CD8-positive, alpha-beta memory T cell (primary cell): ENCODE measurements at regions of chr17 and their contacts with region 1.

Region 1: GRCh38 chr17:29777663-29778062 is 152.4 kb downstream of the SSH2 start:
- DNase-seq: no peak
- H3K4me3 ChIP-seq: no peak overlapping the region
- H3K4me3 Mint-ChIP-seq: no peak overlapping the region
- H3K27ac ChIP-seq: no peak overlapping the region
- H3K27ac Mint-ChIP-seq: peak overlapping the region in 1 of 8 donors; percentile 56
- H3K4me1 ChIP-seq: peaks cover 4% of the 10 kb centered on the region
- H3K4me1 Mint-ChIP-seq: peaks cover 8 to 9% (median 8%) of the 10 kb centered on the region in 3 donors
- H3K27me3 ChIP-seq: no peaks in the 10 kb centered on the region
- H3K27me3 Mint-ChIP-seq: no peaks in the 10 kb centered on the region

Region 2: DNA sequence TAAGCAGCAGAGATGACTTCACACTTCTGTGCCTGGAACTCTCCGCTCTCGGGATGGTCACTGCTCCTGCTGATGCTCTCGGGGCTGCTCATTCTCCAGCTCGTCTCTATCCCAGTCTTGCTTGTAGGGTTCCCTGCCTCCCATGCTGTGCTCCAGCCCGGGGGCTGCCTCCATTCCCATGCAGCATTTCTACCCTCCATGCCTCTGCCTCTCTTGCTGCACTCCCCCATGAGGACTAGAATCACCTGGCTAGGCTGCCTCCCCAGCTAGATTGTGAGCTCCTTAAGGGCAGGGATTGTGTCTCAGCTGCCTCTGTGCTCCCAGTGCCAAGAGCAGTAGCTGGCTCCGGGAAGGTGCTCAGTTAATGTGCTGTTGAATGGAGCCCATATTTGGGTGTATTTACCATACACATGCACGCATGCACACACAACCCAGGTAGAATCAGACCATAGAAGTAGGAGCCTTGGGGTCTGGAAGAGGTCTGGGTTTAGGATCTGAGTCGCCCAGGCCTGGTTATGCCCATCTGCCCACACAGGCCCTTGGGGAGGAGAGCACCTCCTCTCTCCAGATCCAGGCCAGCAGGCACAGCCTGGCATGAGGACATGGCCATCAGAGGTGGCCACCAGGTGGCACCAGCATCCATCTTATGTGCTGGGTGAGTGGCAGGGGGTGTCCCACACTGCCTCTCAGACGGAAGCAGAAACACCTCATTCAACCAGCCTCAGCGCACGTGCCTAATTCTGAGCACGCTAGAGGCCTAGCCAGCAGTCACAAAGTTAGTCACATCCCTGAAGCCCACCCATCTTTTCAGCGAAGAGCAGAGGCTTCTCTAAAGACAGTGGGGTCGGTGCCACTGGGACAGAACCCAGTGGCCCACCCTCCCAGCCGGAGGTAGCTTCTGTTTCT is 197.5 kb before region 1 on chr17:
- CTCF ChIA-PET with region 1: interaction called, 18 read pairs
- POLR2A ChIA-PET with region 1: no interaction called
- DNase-seq: peak; percentile 83 to 92 (median 86)
- H3K4me3 ChIP-seq: no peak overlapping the region
- H3K4me3 Mint-ChIP-seq: peak overlapping the region in 3 of 7 donors; percentile 6 to 51 (median 11)
- H3K27ac ChIP-seq: no peak overlapping the region
- H3K27ac Mint-ChIP-seq: peak overlapping the region; percentile 46 to 93 (median 87)
- H3K4me1 ChIP-seq: peaks cover 17% of the 10 kb centered on the region
- H3K4me1 Mint-ChIP-seq: peaks cover 17 to 23% (median 17%) of the 10 kb centered on the region in 3 donors
- H3K27me3 ChIP-seq: no peaks in the 10 kb centered on the region
- H3K27me3 Mint-ChIP-seq: peaks cover 0 to 2% of the 10 kb centered on the region in 2 donors

Region 3: GRCh38 chr17:29640413-29640812 is 137.2 kb before region 1 on chr17:
- CTCF ChIA-PET with region 1: interaction called, 51 read pairs
- POLR2A ChIA-PET with region 1: interaction called, 3 read pairs
- DNase-seq: no peak
- H3K4me3 ChIP-seq: no peak overlapping the region
- H3K4me3 Mint-ChIP-seq: peak overlapping the region in 1 of 7 donors; percentile 27
- H3K27ac ChIP-seq: no peak overlapping the region
- H3K27ac Mint-ChIP-seq: peak overlapping the region in 7 of 8 donors; percentile 3 to 76 (median 45)
- H3K4me1 ChIP-seq: no peaks in the 10 kb centered on the region
- H3K4me1 Mint-ChIP-seq: peaks cover 11 to 19% (median 12%) of the 10 kb centered on the region in 3 donors
- H3K27me3 ChIP-seq: no peaks in the 10 kb centered on the region
- H3K27me3 Mint-ChIP-seq: no peaks in the 10 kb centered on the region

Region 4: DNA sequence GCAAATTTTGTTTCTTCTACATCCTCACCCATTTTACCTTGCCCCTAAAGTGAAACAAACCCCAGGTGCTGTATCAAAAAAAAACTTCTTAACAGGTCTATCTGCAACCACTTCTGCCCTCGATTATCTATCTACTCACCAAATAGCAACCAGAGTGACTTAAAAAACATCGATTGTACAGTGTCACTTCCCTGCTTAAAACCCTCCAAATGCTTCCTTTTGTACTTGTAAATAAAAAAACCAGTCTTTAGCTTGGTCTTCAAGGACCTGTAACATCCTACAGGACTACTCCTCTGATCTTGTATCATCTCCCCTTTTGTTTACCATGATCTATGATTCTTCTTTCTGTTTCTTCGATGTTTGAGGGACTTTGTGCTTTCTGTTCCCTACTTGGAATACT is 72.3 kb before region 1 on chr17:
- CTCF ChIA-PET with region 1: interaction called, 10 read pairs
- POLR2A ChIA-PET with region 1: no interaction called
- DNase-seq: peak in 2 of 5 donors; percentile 27 to 40
- H3K4me3 ChIP-seq: peak overlapping the region; percentile 8
- H3K4me3 Mint-ChIP-seq: peak overlapping the region; percentile 14 to 93 (median 68)
- H3K27ac ChIP-seq: peak overlapping the region; percentile 18
- H3K27ac Mint-ChIP-seq: peak overlapping the region; percentile 64 to 100 (median 96)
- H3K4me1 ChIP-seq: peaks cover 46% of the 10 kb centered on the region
- H3K4me1 Mint-ChIP-seq: peaks cover 51 to 69% (median 64%) of the 10 kb centered on the region in 3 donors
- H3K27me3 ChIP-seq: no peaks in the 10 kb centered on the region
- H3K27me3 Mint-ChIP-seq: no peaks in the 10 kb centered on the region

Region 5: DNA sequence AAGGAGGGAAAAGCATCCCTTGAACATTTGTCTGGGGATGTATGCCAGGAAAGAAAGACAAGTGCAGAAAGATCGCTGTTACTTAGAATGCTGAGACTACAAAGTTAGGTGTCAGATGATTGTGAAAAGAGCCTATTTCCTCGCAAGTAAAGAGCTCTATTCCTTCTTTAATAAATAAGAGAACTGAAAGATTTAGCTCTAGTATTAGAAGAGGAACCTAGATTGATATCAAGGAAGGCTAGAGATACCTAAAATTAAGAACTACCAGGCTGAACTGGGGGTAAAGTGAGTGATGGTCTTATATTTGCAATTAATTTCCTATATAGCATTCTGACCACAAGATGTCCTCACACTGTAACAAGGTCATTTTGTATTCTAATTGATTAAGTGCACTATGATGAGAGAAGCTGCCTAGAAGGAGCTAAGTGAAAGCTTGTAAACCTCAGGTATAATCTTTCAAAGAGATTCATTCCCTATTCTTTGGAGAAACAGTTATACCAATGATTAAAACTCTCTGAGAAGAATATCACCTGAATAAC is 90.0 kb after region 1 on chr17:
- CTCF ChIA-PET with region 1: no interaction called
- POLR2A ChIA-PET with region 1: no interaction called
- DNase-seq: no peak
- H3K4me3 ChIP-seq: no peak overlapping the region
- H3K4me3 Mint-ChIP-seq: no peak overlapping the region
- H3K27ac ChIP-seq: no peak overlapping the region
- H3K27ac Mint-ChIP-seq: peak overlapping the region in 1 of 8 donors; percentile 11
- H3K4me1 ChIP-seq: peaks cover 4% of the 10 kb centered on the region
- H3K4me1 Mint-ChIP-seq: peaks cover 20 to 43% (median 26%) of the 10 kb centered on the region in 3 donors
- H3K27me3 ChIP-seq: no peaks in the 10 kb centered on the region
- H3K27me3 Mint-ChIP-seq: no peaks in the 10 kb centered on the region